ENCODE measurements at regions of chr14 and their contacts with region 1.

Region 1: GRCh38 chr14:69708586-69709174 is 58.3 kb upstream of the SRSF5 start:
- DNase-seq: peak in 8 of 14 experiments; percentile 20 to 52 (median 27)
- ATAC-seq: peak; percentile 72
- H3K4me3 ChIP-seq: no peak overlapping the region
- H3K4me3 Mint-ChIP-seq: no peak overlapping the region
- H3K27ac ChIP-seq: no peak overlapping the region
- H3K27ac Mint-ChIP-seq: peak overlapping the region; percentile 27
- H3K4me1 ChIP-seq: peaks cover 34% of the 10 kb centered on the region
- H3K4me1 Mint-ChIP-seq: peaks cover 35% of the 10 kb centered on the region
- H3K27me3 ChIP-seq: no peaks in the 10 kb centered on the region
- H3K27me3 Mint-ChIP-seq: no peaks in the 10 kb centered on the region
- CTCF ChIP-seq: peak; percentile 23

Region 2: GRCh38 chr14:69586404-69586803 is 122.3 kb before region 1 on chr14:
- CTCF ChIA-PET with region 1: interaction called, 12 read pairs
- POLR2A ChIA-PET with region 1: no interaction called
- intact Hi-C with region 1: no loop called
- DNase-seq: no peak
- ATAC-seq: no peak
- H3K4me3 ChIP-seq: no peak overlapping the region
- H3K4me3 Mint-ChIP-seq: no peak overlapping the region
- H3K27ac ChIP-seq: no peak overlapping the region
- H3K27ac Mint-ChIP-seq: no peak overlapping the region
- H3K4me1 ChIP-seq: no peaks in the 10 kb centered on the region
- H3K4me1 Mint-ChIP-seq: no peaks in the 10 kb centered on the region
- H3K27me3 ChIP-seq: no peaks in the 10 kb centered on the region
- H3K27me3 Mint-ChIP-seq: no peaks in the 10 kb centered on the region
- CTCF ChIP-seq: no peak

Region 3: GRCh38 chr14:69692594-69692993 is 16.1 kb before region 1 on chr14:
- CTCF ChIA-PET with region 1: no interaction called
- POLR2A ChIA-PET with region 1: no interaction called
- intact Hi-C with region 1: loop called in 1 of 2 experiments (anchors 1 kb)
- DNase-seq: no peak
- ATAC-seq: no peak
- H3K4me3 ChIP-seq: no peak overlapping the region
- H3K4me3 Mint-ChIP-seq: no peak overlapping the region
- H3K27ac ChIP-seq: no peak overlapping the region
- H3K27ac Mint-ChIP-seq: peak overlapping the region; percentile 65
- H3K4me1 ChIP-seq: peaks cover 49% of the 10 kb centered on the region
- H3K4me1 Mint-ChIP-seq: peaks cover 76% of the 10 kb centered on the region
- H3K27me3 ChIP-seq: no peaks in the 10 kb centered on the region
- H3K27me3 Mint-ChIP-seq: no peaks in the 10 kb centered on the region
- CTCF ChIP-seq: no peak

Measured in CD4-positive, alpha-beta T cell (primary cell).